ENCODE measurements at regions of chr10 and their contacts with region 1.

Region 1: DNA sequence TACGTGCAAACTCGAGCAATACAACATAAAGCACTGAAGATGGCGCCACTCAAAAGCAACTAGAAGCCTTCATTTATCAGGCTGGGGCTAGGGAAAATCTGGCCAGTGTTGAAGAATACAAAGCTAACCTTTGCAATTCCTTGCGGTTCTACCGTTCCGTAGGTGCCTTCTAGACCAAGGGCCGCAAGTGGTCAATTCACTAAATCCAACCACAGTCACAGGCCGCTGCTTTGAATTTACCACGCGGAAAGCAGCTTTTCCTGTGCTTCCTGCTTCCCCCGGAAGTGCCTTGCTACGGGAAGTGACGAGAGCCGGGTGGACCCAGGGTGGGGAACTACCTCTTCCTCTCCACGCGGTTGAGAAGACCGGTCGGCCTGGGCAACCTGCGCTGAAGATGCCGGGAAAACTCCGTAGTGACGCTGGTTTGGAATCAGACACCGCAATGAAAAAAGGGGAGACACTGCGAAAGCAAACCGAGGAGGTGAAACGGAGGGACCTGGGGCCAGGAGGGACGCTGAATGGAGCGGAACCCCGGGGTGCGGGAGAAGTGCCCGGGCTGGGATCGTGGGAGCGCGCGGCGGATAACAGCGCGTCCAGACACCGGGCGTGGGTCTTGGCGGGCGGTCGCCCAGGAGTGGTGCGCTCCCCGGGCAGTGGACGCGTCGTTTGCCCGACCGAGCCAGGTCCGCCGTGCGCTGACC is at the start of gene DDX21:
- DNase-seq: peak; percentile 90 to 93 (median 91)
- H3K4me3 ChIP-seq: peak within 1 kb of the TSS; percentile 85 to 96 (median 89)
- H3K4me3 Mint-ChIP-seq: peak within 1 kb of the TSS; percentile 99 to 100
- H3K27ac ChIP-seq: peak within 1 kb of the TSS; percentile 95 to 99
- H3K27ac Mint-ChIP-seq: peak within 1 kb of the TSS; percentile 99 to 100 (median 100)
- H3K4me1 ChIP-seq: peaks cover 22 to 23% of the 10 kb centered on the region in 2 donors
- H3K4me1 Mint-ChIP-seq: peaks cover 26% of the 10 kb centered on the region
- H3K27me3 ChIP-seq: no peaks in the 10 kb centered on the region
- H3K27me3 Mint-ChIP-seq: peaks cover 0 to 3% (median 2%) of the 10 kb centered on the region in 3 donors
- CTCF ChIP-seq: peak; percentile 68
- polyA plus RNA-seq, gene DDX21: 9.8 to 39.3 (median 13.6) TPM

Region 2: GRCh38 chr10:68901104-68901927 is 54.7 kb before region 1 on chr10 and contains the start of gene DDX50:
- intact Hi-C with region 1: loop called in 1 of 2 experiments (anchors 2 kb)
- DNase-seq: peak; percentile 98 to 100 (median 99)
- H3K4me3 ChIP-seq: peak within 1 kb of the TSS; percentile 82 to 87 (median 84)
- H3K4me3 Mint-ChIP-seq: peak within 1 kb of the TSS; percentile 91 to 97
- H3K27ac ChIP-seq: peak within 1 kb of the TSS; percentile 86 to 98
- H3K27ac Mint-ChIP-seq: peak within 1 kb of the TSS; percentile 94 to 98 (median 97)
- H3K4me1 ChIP-seq: peaks cover 15 to 22% of the 10 kb centered on the region in 2 donors
- H3K4me1 Mint-ChIP-seq: peaks cover 29% of the 10 kb centered on the region
- H3K27me3 ChIP-seq: no peaks in the 10 kb centered on the region
- H3K27me3 Mint-ChIP-seq: peaks cover 0 to 2% (median 0%) of the 10 kb centered on the region in 3 donors
- CTCF ChIP-seq: no peak
- polyA plus RNA-seq, gene DDX50: 14.2 to 17.1 (median 17.0) TPM